ENCODE measurements at regions of chr3 and their contacts with region 1.

Region 1: GRCh38 chr3:172904711-172905373 is 154.3 kb downstream of the ECT2 start:
- DNase-seq: no peak
- H3K4me3 ChIP-seq: no peak overlapping the region
- H3K27ac ChIP-seq: no peak overlapping the region
- H3K4me1 ChIP-seq: no peaks in the 10 kb centered on the region
- H3K27me3 ChIP-seq: no peaks in the 10 kb centered on the region
- CTCF ChIP-seq: no peak
- POLR2A ChIP-seq: no peak

Region 2: GRCh38 chr3:172087602-172088580 is 817.0 kb before region 1 on chr3:
- intact Hi-C with region 1: no loop called
- DNase-seq: no peak
- H3K4me3 ChIP-seq: no peak overlapping the region
- H3K27ac ChIP-seq: peak overlapping the region in 1 of 2 donors; percentile 41
- H3K4me1 ChIP-seq: peaks cover 0 to 10% of the 10 kb centered on the region in 2 donors
- H3K27me3 ChIP-seq: no peaks in the 10 kb centered on the region
- CTCF ChIP-seq: no peak
- POLR2A ChIP-seq: no peak

Region 3: GRCh38 chr3:172666873-172667694 is 237.8 kb before region 1 on chr3:
- intact Hi-C with region 1: no loop called
- DNase-seq: peak; percentile 67 to 77
- H3K4me3 ChIP-seq: peak overlapping the region in 2 of 3 donors; percentile 15 to 40
- H3K27ac ChIP-seq: peak overlapping the region; percentile 13 to 46
- H3K4me1 ChIP-seq: peaks cover 0 to 3% of the 10 kb centered on the region in 2 donors
- H3K27me3 ChIP-seq: no peaks in the 10 kb centered on the region
- CTCF ChIP-seq: peak; percentile 95 to 97 (median 97)
- POLR2A ChIP-seq: no peak

Region 4: GRCh38 chr3:172973799-172974198 is 69.0 kb after region 1 on chr3:
- intact Hi-C with region 1: loop called (anchors 2 kb)
- DNase-seq: no peak
- H3K4me3 ChIP-seq: no peak overlapping the region
- H3K27ac ChIP-seq: no peak overlapping the region
- H3K4me1 ChIP-seq: no peaks in the 10 kb centered on the region
- H3K27me3 ChIP-seq: no peaks in the 10 kb centered on the region
- CTCF ChIP-seq: no peak
- POLR2A ChIP-seq: no peak